ENCODE measurements at regions of chr3 and their contacts with region 1.

Region 1: DNA sequence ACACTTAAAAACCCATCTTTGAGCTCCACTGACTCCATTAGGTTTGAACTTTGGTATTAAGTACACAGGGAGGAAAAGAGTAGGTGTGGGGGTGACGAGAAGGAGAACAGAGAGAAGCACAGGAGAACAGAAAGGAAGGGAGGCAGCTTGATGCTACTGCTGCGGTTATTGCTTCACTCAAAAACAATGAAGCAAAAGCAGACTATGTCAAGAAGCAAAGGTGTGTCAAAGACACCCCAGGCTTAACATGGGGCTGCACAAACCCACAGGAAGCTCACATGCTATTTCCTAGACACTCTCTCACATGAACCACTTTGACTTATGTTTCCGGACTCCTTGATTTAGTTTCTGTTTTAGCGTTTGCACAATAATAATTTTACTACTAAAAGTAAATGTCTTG is 961.0 kb upstream of the CFAP20DC start:
- DNase-seq: peak; percentile 65
- ATAC-seq: peak; percentile 99
- H3K4me3 ChIP-seq: no peak overlapping the region
- H3K27ac ChIP-seq: no peak overlapping the region
- H3K4me1 ChIP-seq: no peaks in the 10 kb centered on the region
- H3K27me3 ChIP-seq: no peaks in the 10 kb centered on the region
- CTCF ChIP-seq: no peak
- EP300 ChIP-seq: no peak
- POLR2A ChIP-seq: no peak
- RAD21 ChIP-seq: no peak

Region 2: GRCh38 chr3:59580996-59581395 is 429.8 kb before region 1 on chr3:
- CTCF ChIA-PET with region 1: no interaction called
- POLR2A ChIA-PET with region 1: no interaction called
- RAD21 ChIA-PET with region 1: no interaction called
- SMC1A ChIA-PET with region 1: no interaction called
- in situ Hi-C with region 1: no loop called
- intact Hi-C with region 1: loop called (anchors 10 kb)
- DNase-seq: no peak
- ATAC-seq: peak; percentile 60
- H3K4me3 ChIP-seq: no peak overlapping the region
- H3K27ac ChIP-seq: no peak overlapping the region
- H3K4me1 ChIP-seq: peaks cover 5% of the 10 kb centered on the region; the same call in 1 of the 2 replicates
- H3K27me3 ChIP-seq: no peaks in the 10 kb centered on the region
- CTCF ChIP-seq: no peak
- EP300 ChIP-seq: no peak
- POLR2A ChIP-seq: no peak
- RAD21 ChIP-seq: no peak

Measured in GM12878 (cell line).